ENCODE measurements at regions of chr3 and their contacts with region 1.

Region 1: DNA sequence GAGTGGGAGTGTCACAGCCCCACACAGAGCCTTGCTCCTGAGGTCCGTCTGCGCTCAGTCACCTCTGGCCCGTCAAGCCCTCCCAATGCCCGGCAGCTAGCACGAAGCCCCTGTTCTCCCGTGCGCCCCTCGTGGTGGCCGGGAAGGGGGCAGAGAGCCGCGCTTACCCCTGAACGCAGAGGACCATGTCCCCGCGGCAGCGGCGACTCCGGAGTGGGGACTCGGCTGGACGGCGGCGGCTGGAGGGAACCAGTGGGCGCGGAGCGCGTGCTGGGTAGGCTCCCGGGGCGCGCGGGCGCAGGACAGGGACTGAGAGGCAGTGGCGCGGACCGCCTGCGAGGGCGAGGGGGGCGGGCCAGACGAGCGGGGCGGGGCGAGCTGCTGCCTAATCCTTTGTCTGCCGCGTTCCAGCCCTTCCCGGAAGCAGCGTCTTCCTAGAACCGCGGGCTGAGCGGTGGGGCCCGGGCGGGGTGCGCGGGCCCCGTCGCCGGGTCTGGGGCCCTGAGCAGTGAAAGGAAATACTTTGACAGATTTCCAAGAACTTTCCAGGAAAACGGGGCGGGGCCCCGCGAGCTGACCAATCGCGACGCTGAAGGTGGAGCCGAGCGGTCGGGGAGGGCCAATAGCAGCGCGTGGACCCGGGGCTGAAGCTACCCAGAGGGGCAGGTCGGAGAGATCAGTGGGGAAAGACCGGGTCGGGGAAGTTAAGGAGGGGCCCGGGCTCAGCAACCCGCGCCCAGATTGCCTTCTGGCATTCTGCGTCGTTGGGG is at the start of gene CISH:
- DNase-seq: peak; percentile 99
- H3K4me3 Mint-ChIP-seq: peak within 1 kb of the TSS; percentile 98
- H3K27ac Mint-ChIP-seq: peak within 1 kb of the TSS; percentile 99
- H3K4me1 Mint-ChIP-seq: peaks cover 33% of the 10 kb centered on the region
- H3K27me3 Mint-ChIP-seq: peaks cover 19% of the 10 kb centered on the region

Region 2: GRCh38 chr3:50381383-50381782 is 230.3 kb before region 1 on chr3:
- CTCF ChIA-PET with region 1: no interaction called
- DNase-seq: no peak
- H3K4me3 Mint-ChIP-seq: no peak overlapping the region
- H3K27ac Mint-ChIP-seq: no peak overlapping the region
- H3K4me1 Mint-ChIP-seq: no peaks in the 10 kb centered on the region
- H3K27me3 Mint-ChIP-seq: peaks cover 3% of the 10 kb centered on the region

Region 3: GRCh38 chr3:50542177-50543034 is 69.2 kb before region 1 on chr3:
- CTCF ChIA-PET with region 1: interaction called, 12 read pairs
- DNase-seq: peak; percentile 72
- H3K4me3 Mint-ChIP-seq: no peak overlapping the region
- H3K27ac Mint-ChIP-seq: no peak overlapping the region
- H3K4me1 Mint-ChIP-seq: no peaks in the 10 kb centered on the region
- H3K27me3 Mint-ChIP-seq: peaks cover 69% of the 10 kb centered on the region

Region 4: DNA sequence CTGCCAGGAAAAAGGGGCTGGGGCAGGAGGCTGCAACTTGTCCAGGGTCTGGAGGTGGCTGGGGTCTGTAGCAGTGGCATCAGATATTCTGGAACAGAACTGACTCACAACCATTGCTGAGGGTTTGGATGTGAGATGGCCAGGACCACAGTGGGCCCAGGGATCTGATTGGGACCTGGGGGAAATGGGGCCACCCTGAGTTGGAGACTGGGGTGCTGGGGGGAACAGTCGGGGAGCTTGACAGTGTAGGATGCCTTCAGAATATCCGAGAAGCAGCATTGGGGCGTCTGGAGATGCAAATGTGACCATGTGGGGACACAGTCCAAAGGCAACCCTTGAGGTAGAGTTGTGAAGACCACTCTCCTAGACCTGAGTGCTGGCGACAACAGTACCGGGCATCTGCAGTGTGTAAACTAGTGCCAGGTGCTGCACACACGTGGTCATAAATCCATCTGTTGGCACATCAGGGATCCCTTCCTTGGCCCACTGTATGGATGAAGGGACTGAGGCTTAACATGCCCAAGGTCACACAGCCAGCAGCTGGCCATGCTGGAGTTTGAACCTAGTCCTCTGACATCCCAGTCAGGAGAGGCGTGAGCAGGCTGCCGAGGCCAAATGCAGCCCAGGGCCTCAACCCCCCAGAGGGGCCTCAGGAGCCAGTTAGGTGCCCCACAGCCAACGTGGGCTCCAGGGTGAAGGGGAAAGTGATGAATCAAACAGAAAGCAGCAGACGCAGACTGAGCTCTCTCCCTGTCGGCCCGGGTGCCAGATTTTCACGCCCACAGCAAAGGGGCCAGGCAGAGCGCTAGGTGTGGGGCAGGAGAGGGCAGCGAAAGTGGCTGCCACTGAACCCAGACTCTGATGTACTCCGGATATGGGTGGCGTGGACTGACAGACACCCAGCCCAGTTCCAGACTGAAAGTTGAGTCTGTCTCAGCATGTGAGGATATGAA is 23.6 kb before region 1 on chr3:
- CTCF ChIA-PET with region 1: interaction called, 753 read pairs
- DNase-seq: peak; percentile 78
- H3K4me3 Mint-ChIP-seq: peak overlapping the region; percentile 51
- H3K27ac Mint-ChIP-seq: peak overlapping the region; percentile 98
- H3K4me1 Mint-ChIP-seq: peaks cover 92% of the 10 kb centered on the region
- H3K27me3 Mint-ChIP-seq: no peaks in the 10 kb centered on the region

Region 5: DNA sequence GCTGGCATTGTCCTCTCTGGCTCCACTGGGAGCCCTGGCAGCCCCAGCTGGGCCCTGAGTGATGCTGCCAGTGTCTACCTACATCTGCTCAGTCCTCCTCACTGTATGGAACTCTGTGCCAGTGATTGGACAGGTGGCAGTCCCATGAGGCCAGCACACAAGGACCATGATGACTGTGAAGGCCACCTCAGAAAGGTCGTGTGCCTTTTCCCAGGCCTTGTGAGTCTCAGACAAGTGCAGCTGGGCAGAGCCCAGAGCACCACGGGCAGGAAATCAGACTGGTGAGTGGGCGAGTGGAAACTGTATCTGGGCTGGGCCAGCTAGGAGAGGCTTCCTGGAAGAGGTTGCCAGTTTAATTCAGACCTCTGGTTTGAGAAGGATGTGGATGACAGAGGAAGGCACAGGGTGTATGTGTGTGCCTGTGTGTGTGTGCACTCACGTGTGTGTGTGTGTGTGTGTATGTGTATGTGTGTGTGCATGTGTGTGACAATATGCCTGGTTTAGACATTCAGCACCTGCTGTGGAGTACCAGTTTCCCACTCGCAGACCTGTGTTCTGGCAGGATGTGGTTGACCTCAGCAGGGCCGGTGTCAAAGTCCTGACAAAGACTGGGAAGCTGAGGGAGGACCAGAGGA is 12.3 kb after region 1 on chr3:
- CTCF ChIA-PET with region 1: interaction called, 17 read pairs
- DNase-seq: peak; percentile 63
- H3K4me3 Mint-ChIP-seq: peak overlapping the region; percentile 40
- H3K27ac Mint-ChIP-seq: peak overlapping the region; percentile 86
- H3K4me1 Mint-ChIP-seq: peaks cover 95% of the 10 kb centered on the region
- H3K27me3 Mint-ChIP-seq: no peaks in the 10 kb centered on the region

Region 6: GRCh38 chr3:50652709-50653108 is 41.1 kb after region 1 on chr3:
- CTCF ChIA-PET with region 1: interaction called, 147 read pairs
- DNase-seq: peak; percentile 74
- H3K4me3 Mint-ChIP-seq: no peak overlapping the region
- H3K27ac Mint-ChIP-seq: no peak overlapping the region
- H3K4me1 Mint-ChIP-seq: peaks cover 26% of the 10 kb centered on the region
- H3K27me3 Mint-ChIP-seq: no peaks in the 10 kb centered on the region

Region 7: GRCh38 chr3:51371943-51372557 is 760.4 kb after region 1 on chr3:
- CTCF ChIA-PET with region 1: interaction called, 39 read pairs
- DNase-seq: peak; percentile 72
- H3K4me3 Mint-ChIP-seq: no peak overlapping the region
- H3K27ac Mint-ChIP-seq: no peak overlapping the region
- H3K4me1 Mint-ChIP-seq: no peaks in the 10 kb centered on the region
- H3K27me3 Mint-ChIP-seq: peaks cover 9% of the 10 kb centered on the region

Region 8: GRCh38 chr3:51391075-51391567 is 779.5 kb after region 1 on chr3 and contains the start of gene RBM15B:
- CTCF ChIA-PET with region 1: interaction called, 31 read pairs
- DNase-seq: peak; percentile 98
- H3K4me3 Mint-ChIP-seq: peak within 1 kb of the TSS; percentile 82
- H3K27ac Mint-ChIP-seq: peak within 1 kb of the TSS; percentile 93
- H3K4me1 Mint-ChIP-seq: peaks cover 78% of the 10 kb centered on the region
- H3K27me3 Mint-ChIP-seq: no peaks in the 10 kb centered on the region

Measured in activated naive CD4-positive, alpha-beta T cell treated with anti-CD3 and anti-CD28 coated beads, Interleukin-2, amount 10 ng/mL, durations not matched to agents 7 days and 5 days (primary cell).